ENCODE measurements at regions of chr7 and their contacts with region 1.

Region 1: GRCh38 chr7:43486634-43487033 is 96.3 kb upstream of the STK17A start:
- DNase-seq: no peak
- H3K4me3 ChIP-seq: no peak overlapping the region
- H3K4me3 Mint-ChIP-seq: peak overlapping the region; percentile 53
- H3K27ac Mint-ChIP-seq: peak overlapping the region; percentile 90
- H3K4me1 ChIP-seq: peaks cover 68% of the 10 kb centered on the region
- H3K4me1 Mint-ChIP-seq: peaks cover 55% of the 10 kb centered on the region
- H3K27me3 ChIP-seq: no peaks in the 10 kb centered on the region
- H3K27me3 Mint-ChIP-seq: no peaks in the 10 kb centered on the region
- CTCF ChIP-seq: no peak

Region 2: GRCh38 chr7:43461349-43462024 is 25.1 kb before region 1 on chr7:
- CTCF ChIA-PET with region 1: no interaction called
- POLR2A ChIA-PET with region 1: no interaction called
- intact Hi-C with region 1: loop called (anchors 2 kb)
- DNase-seq: no peak
- H3K4me3 ChIP-seq: no peak overlapping the region
- H3K4me3 Mint-ChIP-seq: no peak overlapping the region
- H3K27ac Mint-ChIP-seq: no peak overlapping the region
- H3K4me1 ChIP-seq: peaks cover 20% of the 10 kb centered on the region; the same call in 1 of the 2 replicates
- H3K4me1 Mint-ChIP-seq: peaks cover 18% of the 10 kb centered on the region
- H3K27me3 ChIP-seq: no peaks in the 10 kb centered on the region
- H3K27me3 Mint-ChIP-seq: no peaks in the 10 kb centered on the region
- CTCF ChIP-seq: no peak

Region 3: DNA sequence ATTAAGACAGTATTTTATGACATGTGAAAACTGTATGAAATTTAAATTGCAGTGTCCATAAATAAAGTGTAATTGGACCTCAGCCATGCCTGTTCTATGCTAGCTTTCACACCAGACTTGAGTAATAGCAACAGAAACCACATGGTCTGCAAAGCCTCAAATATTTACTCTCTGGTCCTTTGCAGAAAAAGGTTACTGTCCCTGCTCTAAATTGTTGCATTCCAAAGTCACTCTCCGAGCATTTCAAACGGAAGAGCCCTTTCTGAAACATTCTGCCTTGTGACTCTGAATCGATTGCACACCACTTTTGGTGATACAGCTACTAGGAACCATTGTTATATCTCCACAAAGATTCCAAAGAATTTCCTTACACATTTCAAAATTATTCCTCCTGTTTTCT is 15.2 kb after region 1 on chr7:
- CTCF ChIA-PET with region 1: no interaction called
- POLR2A ChIA-PET with region 1: no interaction called
- intact Hi-C with region 1: loop called (anchors 1 kb)
- DNase-seq: peak in 1 of 2 experiments; percentile 31
- H3K4me3 ChIP-seq: no peak overlapping the region
- H3K4me3 Mint-ChIP-seq: no peak overlapping the region
- H3K27ac Mint-ChIP-seq: no peak overlapping the region
- H3K4me1 ChIP-seq: peaks cover 18% of the 10 kb centered on the region
- H3K4me1 Mint-ChIP-seq: no peaks in the 10 kb centered on the region
- H3K27me3 ChIP-seq: no peaks in the 10 kb centered on the region
- H3K27me3 Mint-ChIP-seq: no peaks in the 10 kb centered on the region
- CTCF ChIP-seq: no peak

Region 4: DNA sequence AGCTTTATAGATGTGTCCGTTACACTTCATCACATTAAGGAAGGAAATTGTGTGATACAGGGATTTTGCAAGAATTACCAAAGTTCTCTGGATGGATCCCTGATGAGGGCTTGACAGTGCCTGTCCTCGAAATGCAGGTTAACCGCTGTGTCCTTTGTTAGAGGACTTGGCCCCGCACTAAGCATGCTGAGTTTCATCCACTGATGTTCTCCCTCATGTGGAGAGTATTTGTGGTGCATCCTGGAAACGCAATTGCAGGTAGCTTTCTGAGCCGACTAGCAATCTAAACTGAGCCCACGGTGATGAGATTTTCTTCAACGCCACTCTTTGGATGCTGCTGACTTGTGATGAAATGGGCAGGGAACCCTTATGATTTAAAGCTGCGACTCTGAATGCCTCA is 24.4 kb after region 1 on chr7:
- CTCF ChIA-PET with region 1: no interaction called
- POLR2A ChIA-PET with region 1: no interaction called
- intact Hi-C with region 1: loop called (anchors 1 kb)
- DNase-seq: peak; percentile 50 to 52
- H3K4me3 ChIP-seq: no peak overlapping the region
- H3K4me3 Mint-ChIP-seq: no peak overlapping the region
- H3K27ac Mint-ChIP-seq: no peak overlapping the region
- H3K4me1 ChIP-seq: 0 out of 2 replicates have a peak, but pooled peaks cover 6% of the 10 kb centered on the region
- H3K4me1 Mint-ChIP-seq: peaks cover 7% of the 10 kb centered on the region
- H3K27me3 ChIP-seq: no peaks in the 10 kb centered on the region
- H3K27me3 Mint-ChIP-seq: no peaks in the 10 kb centered on the region
- CTCF ChIP-seq: peak; percentile 38 to 51

Region 5: GRCh38 chr7:43553999-43554398 is 67.4 kb after region 1 on chr7:
- CTCF ChIA-PET with region 1: no interaction called
- POLR2A ChIA-PET with region 1: no interaction called
- intact Hi-C with region 1: loop called (anchors 2 kb)
- DNase-seq: peak in 1 of 2 experiments; percentile 59
- H3K4me3 ChIP-seq: no peak overlapping the region
- H3K4me3 Mint-ChIP-seq: no peak overlapping the region
- H3K27ac Mint-ChIP-seq: peak overlapping the region; percentile 38
- H3K4me1 ChIP-seq: peaks cover 9% of the 10 kb centered on the region; the same call in 1 of the 2 replicates
- H3K4me1 Mint-ChIP-seq: peaks cover 14% of the 10 kb centered on the region
- H3K27me3 ChIP-seq: no peaks in the 10 kb centered on the region
- H3K27me3 Mint-ChIP-seq: no peaks in the 10 kb centered on the region
- CTCF ChIP-seq: no peak